A673 (cell line): ENCODE measurements at regions of chr6 and their contacts with region 1.

Region 1: GRCh38 chr6:37807656-37808055 is 11.9 kb upstream of the ZFAND3 start:
- DNase-seq: no peak
- H3K4me3 ChIP-seq: no peak overlapping the region
- H3K27ac ChIP-seq: no peak overlapping the region
- H3K4me1 ChIP-seq: no peaks in the 10 kb centered on the region
- H3K27me3 ChIP-seq: no peaks in the 10 kb centered on the region
- CTCF ChIP-seq: no peak

Region 2: DNA sequence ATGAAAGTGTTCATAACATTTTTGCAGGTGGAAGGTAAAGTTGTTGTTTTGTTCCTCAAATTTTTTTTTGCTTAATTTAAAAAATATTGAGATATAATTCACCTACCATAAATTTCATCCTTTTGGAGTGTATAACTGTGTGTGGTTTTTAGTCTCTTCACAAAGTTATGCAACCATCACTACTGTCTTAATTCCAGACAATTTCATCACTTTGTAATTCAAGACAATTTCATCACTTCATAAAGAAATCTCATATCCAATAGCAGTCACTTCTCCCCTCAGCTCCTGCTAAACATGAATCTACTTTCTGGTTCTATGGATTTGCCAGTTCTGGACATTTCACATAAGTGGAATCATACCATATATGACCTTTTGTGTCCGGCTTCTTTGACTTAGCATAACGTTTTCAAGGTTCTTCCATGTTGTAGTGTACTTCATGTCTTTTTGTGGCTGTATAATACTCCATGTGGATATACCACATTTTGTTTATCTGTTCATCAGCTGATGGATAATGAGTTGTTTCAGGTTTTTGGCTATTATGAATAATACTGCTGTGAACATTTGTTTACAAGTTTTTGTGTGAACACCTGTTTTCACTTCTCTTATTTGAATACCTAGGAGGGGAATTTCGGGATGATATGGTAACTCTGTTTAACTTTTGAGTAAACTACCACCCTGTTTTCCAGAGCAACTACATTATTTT is 30.7 kb after region 1 on chr6:
- CTCF ChIA-PET with region 1: no interaction called
- POLR2A ChIA-PET with region 1: interaction called, 12 read pairs
- intact Hi-C with region 1: no loop called
- DNase-seq: no peak
- H3K4me3 ChIP-seq: no peak overlapping the region
- H3K27ac ChIP-seq: peak overlapping the region; percentile 35
- H3K4me1 ChIP-seq: peaks cover 14% of the 10 kb centered on the region
- H3K27me3 ChIP-seq: no peaks in the 10 kb centered on the region
- CTCF ChIP-seq: no peak

Region 3: GRCh38 chr6:38514399-38514798 is 706.7 kb after region 1 on chr6:
- CTCF ChIA-PET with region 1: interaction called, 14 read pairs
- POLR2A ChIA-PET with region 1: no interaction called
- intact Hi-C with region 1: no loop called
- DNase-seq: no peak
- H3K4me3 ChIP-seq: no peak overlapping the region
- H3K27ac ChIP-seq: no peak overlapping the region
- H3K4me1 ChIP-seq: no peaks in the 10 kb centered on the region
- H3K27me3 ChIP-seq: no peaks in the 10 kb centered on the region
- CTCF ChIP-seq: no peak